ENCODE measurements at regions of chr12 and their contacts with region 1.

Region 1: GRCh38 chr12:116277393-116278278 is at the start of gene MED13L:
- DNase-seq: peak; percentile 90 to 96 (median 93)
- ATAC-seq: peak; percentile 88 to 97 (median 93)
- H3K4me3 ChIP-seq: peak within 1 kb of the TSS; percentile 71 to 95 (median 88)
- H3K27ac ChIP-seq: peak within 1 kb of the TSS; percentile 90 to 99 (median 95)
- H3K4me1 ChIP-seq: peaks cover 0 to 63% (median 29%) of the 10 kb centered on the region in 12 donors
- H3K27me3 ChIP-seq: no peaks in the 10 kb centered on the region
- CTCF ChIP-seq: peak in 10 of 12 donors; percentile 13 to 67 (median 51)
- POLR2A ChIP-seq: peak in 1 of 2 donors; percentile 38
- total RNA-seq, gene MED13L: 48.6 to 84.1 (median 68.7) TPM

Region 2: DNA sequence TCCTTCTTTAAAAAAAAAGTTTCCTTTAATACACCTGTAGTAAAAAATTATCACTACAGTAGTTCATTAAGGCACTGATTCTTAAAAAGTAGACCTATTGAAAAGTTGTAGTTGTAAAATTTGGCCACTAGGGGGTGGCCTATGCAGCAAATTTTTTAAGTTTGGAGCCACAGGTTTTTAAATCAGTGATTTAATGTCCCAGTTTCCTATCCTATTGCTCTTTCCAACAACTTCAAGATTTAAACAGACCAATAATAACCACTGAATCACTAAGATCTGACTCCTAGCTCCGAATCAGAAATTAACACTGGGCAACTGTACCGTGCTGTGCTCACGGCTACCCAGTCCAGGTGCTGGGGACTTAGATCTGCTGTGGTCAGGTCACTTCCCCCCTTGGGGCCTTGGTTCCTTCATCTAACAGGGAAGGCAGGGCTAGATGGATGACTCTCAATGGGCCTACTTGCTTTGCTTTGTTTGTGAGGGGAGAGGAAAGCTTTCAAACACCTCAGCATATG is 279.5 kb before region 1 on chr12:
- intact Hi-C with region 1: loop called in 1 of 10 experiments (anchors 5 kb)
- DNase-seq: no peak
- ATAC-seq: peak in 2 of 4 donors; percentile 39 to 53
- H3K4me3 ChIP-seq: no peak overlapping the region
- H3K27ac ChIP-seq: peak overlapping the region in 2 of 12 donors; percentile 1 to 11
- H3K4me1 ChIP-seq: peaks cover 0 to 13% (median 3%) of the 10 kb centered on the region in 12 donors
- H3K27me3 ChIP-seq: no peaks in the 10 kb centered on the region
- CTCF ChIP-seq: peak; percentile 76 to 97 (median 86)
- POLR2A ChIP-seq: no peak

Region 3: DNA sequence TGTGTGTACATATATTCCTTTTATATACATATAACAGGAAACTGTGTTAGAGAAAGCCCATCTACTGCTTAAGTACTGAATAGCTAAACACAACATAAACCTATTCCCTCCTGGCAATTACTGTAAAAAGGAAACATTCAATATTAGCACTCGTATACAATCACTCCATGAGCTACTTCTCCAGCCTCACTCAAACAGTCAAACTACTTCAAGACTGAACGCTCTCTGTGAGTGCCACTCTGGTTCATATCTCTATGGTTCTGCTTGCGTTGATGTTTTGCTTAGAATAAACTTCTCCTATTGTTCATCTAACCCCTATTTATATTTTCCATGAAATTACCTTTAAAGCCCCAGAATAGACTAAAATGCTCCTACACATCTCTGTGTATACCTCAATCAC is 243.9 kb before region 1 on chr12:
- intact Hi-C with region 1: no loop called
- DNase-seq: no peak
- ATAC-seq: no peak
- H3K4me3 ChIP-seq: no peak overlapping the region
- H3K27ac ChIP-seq: no peak overlapping the region
- H3K4me1 ChIP-seq: peaks cover 0 to 3% (median 0%) of the 10 kb centered on the region in 12 donors
- H3K27me3 ChIP-seq: no peaks in the 10 kb centered on the region
- CTCF ChIP-seq: no peak
- POLR2A ChIP-seq: no peak

Region 4: GRCh38 chr12:116091579-116091978 is 186.1 kb before region 1 on chr12:
- intact Hi-C with region 1: no loop called
- DNase-seq: no peak
- ATAC-seq: no peak
- H3K4me3 ChIP-seq: no peak overlapping the region
- H3K27ac ChIP-seq: no peak overlapping the region
- H3K4me1 ChIP-seq: peaks cover 0 to 19% (median 0%) of the 10 kb centered on the region in 12 donors
- H3K27me3 ChIP-seq: no peaks in the 10 kb centered on the region
- CTCF ChIP-seq: no peak
- POLR2A ChIP-seq: no peak

Region 5: GRCh38 chr12:116135209-116135930 is 142.3 kb before region 1 on chr12:
- intact Hi-C with region 1: loop called in 1 of 10 experiments (anchors 2 kb)
- DNase-seq: no peak
- ATAC-seq: peak in 3 of 4 donors; percentile 49 to 64 (median 57)
- H3K4me3 ChIP-seq: no peak overlapping the region
- H3K27ac ChIP-seq: peak overlapping the region in 1 of 12 donors; percentile 18
- H3K4me1 ChIP-seq: peaks cover 3 to 83% (median 44%) of the 10 kb centered on the region in 12 donors
- H3K27me3 ChIP-seq: no peaks in the 10 kb centered on the region
- CTCF ChIP-seq: no peak
- POLR2A ChIP-seq: no peak

Region 6: DNA sequence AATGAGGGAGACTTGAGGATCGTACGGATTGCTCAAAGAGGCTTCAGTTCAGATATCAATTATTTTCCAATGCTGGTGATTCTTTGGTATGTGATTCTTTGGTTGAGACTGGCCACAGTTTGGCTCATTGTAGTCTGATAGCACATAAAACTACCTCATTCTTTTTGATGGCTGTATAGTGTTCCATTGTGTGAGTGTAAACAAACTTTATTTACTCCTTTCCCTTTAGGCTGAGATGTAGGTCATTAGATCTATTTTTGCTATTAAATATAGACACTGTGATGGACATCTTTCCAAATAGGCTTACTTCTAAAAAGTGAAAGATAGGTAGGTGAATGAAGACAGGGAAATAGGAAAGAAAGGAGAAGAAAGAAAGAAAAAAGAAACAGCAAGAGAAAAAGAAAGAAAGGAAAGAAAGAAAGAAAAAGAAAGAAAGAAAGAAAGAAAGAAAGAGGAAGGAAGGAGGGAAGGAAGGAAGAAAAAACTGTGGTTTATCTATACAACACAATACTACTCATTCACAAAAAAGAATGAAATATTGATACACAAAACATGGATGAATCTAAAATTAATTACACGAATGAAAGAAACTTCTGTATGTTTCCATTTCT is 19.7 kb after region 1 on chr12:
- intact Hi-C with region 1: loop called in 1 of 10 experiments (anchors 1 kb)
- DNase-seq: no peak
- ATAC-seq: no peak
- H3K4me3 ChIP-seq: no peak overlapping the region
- H3K27ac ChIP-seq: no peak overlapping the region
- H3K4me1 ChIP-seq: peaks cover 0 to 17% (median 0%) of the 10 kb centered on the region in 12 donors
- H3K27me3 ChIP-seq: no peaks in the 10 kb centered on the region
- CTCF ChIP-seq: no peak
- POLR2A ChIP-seq: no peak

Region 7: GRCh38 chr12:116515684-116516083 is 238.0 kb after region 1 on chr12:
- intact Hi-C with region 1: loop called in 1 of 10 experiments (anchors 10 kb)
- DNase-seq: no peak
- ATAC-seq: peak in 2 of 4 donors; percentile 43 to 54
- H3K4me3 ChIP-seq: no peak overlapping the region
- H3K27ac ChIP-seq: peak overlapping the region in 1 of 12 donors; percentile 37
- H3K4me1 ChIP-seq: peaks cover 0 to 5% (median 0%) of the 10 kb centered on the region in 12 donors
- H3K27me3 ChIP-seq: no peaks in the 10 kb centered on the region
- CTCF ChIP-seq: no peak
- POLR2A ChIP-seq: no peak

Region 8: GRCh38 chr12:116687888-116688287 is 410.3 kb after region 1 on chr12:
- intact Hi-C with region 1: loop called in 3 of 10 experiments (anchors 5 to 10 kb)
- DNase-seq: peak; percentile 47 to 76 (median 54)
- ATAC-seq: peak in 3 of 4 donors; percentile 60 to 85 (median 76)
- H3K4me3 ChIP-seq: no peak overlapping the region
- H3K27ac ChIP-seq: peak overlapping the region in 1 of 12 donors; percentile 12
- H3K4me1 ChIP-seq: peaks cover 0 to 6% (median 1%) of the 10 kb centered on the region in 12 donors
- H3K27me3 ChIP-seq: peaks cover 0 to 25% (median 0%) of the 10 kb centered on the region in 9 donors
- CTCF ChIP-seq: peak; percentile 31 to 66 (median 46)
- POLR2A ChIP-seq: no peak